Ascending aorta (tissue), 2 donors: ENCODE measurements at regions of chr18 and their contacts with region 1.

Region 1: DNA sequence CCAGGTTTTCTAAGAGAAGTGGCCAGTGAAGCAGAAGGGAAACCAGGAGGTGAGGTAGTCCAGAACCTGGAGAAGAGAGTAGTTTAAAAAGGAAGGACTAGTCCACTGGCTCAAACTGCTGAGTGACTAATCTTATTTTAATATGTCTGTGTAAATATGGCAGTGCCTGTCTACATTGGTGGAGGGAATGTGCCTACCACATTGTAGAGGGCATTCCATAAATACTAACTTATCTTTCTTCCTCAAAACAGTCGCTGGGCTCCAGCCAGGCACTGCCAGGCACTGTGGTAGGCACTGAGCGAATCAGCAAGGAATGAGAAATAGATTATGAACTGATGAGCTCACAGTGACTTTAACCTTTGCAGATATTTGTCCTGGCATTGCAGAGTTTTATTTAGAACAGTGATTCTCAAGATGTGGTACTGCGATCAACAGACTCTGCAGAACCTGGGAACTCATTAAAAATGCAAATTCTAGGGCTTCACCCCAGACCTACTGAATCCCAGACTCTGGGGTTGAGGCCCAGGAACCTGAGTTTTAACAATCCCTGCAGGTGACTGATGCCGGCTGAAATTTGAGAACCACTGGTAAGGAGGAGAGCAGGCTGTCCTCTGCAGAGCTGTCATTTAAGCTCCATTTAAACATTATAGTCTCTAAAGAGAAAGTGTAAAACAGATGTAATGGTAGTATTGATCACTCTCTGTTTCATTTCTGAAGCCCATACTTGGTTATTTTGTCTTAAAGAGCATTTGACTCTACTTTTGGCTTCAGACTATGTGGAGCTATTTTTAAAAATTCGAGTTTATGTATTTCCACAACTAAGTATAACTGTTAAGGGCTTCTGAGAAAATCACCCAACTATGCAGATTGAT is 487.9 kb downstream of the DLGAP1 start:
- DNase-seq: peak in 1 of 2 donors; percentile 77
- H3K4me3 ChIP-seq: no peak overlapping the region
- H3K27ac ChIP-seq: peak overlapping the region in 1 of 2 donors; percentile 53
- H3K4me1 ChIP-seq: peaks cover 4 to 6% of the 10 kb centered on the region in 2 donors
- H3K27me3 ChIP-seq: no peaks in the 10 kb centered on the region
- CTCF ChIP-seq: no peak

Region 2: GRCh38 chr18:3799176-3799914 is 167.9 kb before region 1 on chr18:
- intact Hi-C with region 1: no loop called
- DNase-seq: no peak
- H3K4me3 ChIP-seq: no peak overlapping the region
- H3K27ac ChIP-seq: no peak overlapping the region
- H3K4me1 ChIP-seq: no peaks in the 10 kb centered on the region
- H3K27me3 ChIP-seq: no peaks in the 10 kb centered on the region
- CTCF ChIP-seq: no peak

Region 3: DNA sequence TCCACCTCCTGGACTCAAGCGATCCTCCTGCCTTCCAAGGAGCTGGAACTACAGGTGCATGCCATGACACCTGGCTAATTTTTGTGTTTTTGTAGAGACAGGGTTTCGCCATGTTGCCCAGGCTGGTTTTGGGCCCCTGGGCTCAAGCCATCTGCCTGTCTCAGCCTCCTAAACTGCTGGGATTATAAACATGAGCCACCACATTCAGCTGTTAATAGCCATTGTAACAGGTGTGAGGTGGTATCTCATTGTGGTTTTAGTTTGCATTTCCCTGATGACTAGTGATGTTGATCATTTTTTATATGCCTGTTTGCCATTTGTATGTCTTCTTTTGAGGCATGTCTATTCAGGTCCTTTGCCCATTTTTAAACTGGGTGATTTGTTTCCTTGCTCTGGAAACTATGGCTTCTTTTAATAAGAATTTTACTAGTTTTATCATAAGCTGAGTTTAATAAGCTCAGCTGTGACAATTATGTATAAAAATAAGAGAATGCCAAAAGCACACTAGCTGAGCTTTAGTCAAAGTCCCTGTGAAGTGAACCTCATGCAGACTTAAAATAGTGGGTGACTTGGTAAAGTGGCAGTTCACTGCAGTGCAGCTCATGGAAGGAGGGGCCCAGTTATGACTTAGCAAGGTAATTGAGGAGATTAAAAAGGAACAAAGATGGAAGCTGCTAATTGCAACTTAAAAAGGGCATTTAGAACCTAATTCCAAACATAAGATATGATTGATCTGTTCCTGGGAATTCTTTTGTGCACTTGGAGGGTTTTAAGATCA is 52.2 kb before region 1 on chr18:
- intact Hi-C with region 1: loop called (anchors 5 kb)
- DNase-seq: no peak
- H3K4me3 ChIP-seq: no peak overlapping the region
- H3K27ac ChIP-seq: no peak overlapping the region
- H3K4me1 ChIP-seq: peaks cover 0 to 17% of the 10 kb centered on the region in 2 donors
- H3K27me3 ChIP-seq: no peaks in the 10 kb centered on the region
- CTCF ChIP-seq: no peak